CD8-positive, alpha-beta T cell (primary cell): ENCODE measurements at regions of chr11 and their contacts with region 1.

Region 1: GRCh38 chr11:45193695-45194094 is 47.3 kb downstream of the PRDM11 start:
- DNase-seq: no peak
- ATAC-seq: no peak
- H3K4me3 ChIP-seq: no peak overlapping the region
- H3K4me3 Mint-ChIP-seq: no peak overlapping the region
- H3K27ac ChIP-seq: no peak overlapping the region
- H3K27ac Mint-ChIP-seq: no peak overlapping the region
- H3K4me1 ChIP-seq: no peaks in the 10 kb centered on the region
- H3K4me1 Mint-ChIP-seq: no peaks in the 10 kb centered on the region
- H3K27me3 ChIP-seq: no peaks in the 10 kb centered on the region
- H3K27me3 Mint-ChIP-seq: no peaks in the 10 kb centered on the region
- CTCF ChIP-seq: no peak

Region 2: GRCh38 chr11:45267052-45267451 is 73.4 kb after region 1 on chr11:
- CTCF ChIA-PET with region 1: no interaction called
- POLR2A ChIA-PET with region 1: no interaction called
- intact Hi-C with region 1: no loop called
- DNase-seq: peak in 3 of 9 experiments; percentile 8 to 12 (median 12)
- ATAC-seq: no peak
- H3K4me3 ChIP-seq: no peak overlapping the region
- H3K4me3 Mint-ChIP-seq: no peak overlapping the region
- H3K27ac ChIP-seq: no peak overlapping the region
- H3K27ac Mint-ChIP-seq: no peak overlapping the region
- H3K4me1 ChIP-seq: no peaks in the 10 kb centered on the region
- H3K4me1 Mint-ChIP-seq: no peaks in the 10 kb centered on the region
- H3K27me3 ChIP-seq: peaks cover 0 to 6% of the 10 kb centered on the region in 2 experiments
- H3K27me3 Mint-ChIP-seq: peaks cover 45% of the 10 kb centered on the region
- CTCF ChIP-seq: no peak

Region 3: GRCh38 chr11:45301537-45302246 is 108.0 kb after region 1 on chr11:
- CTCF ChIA-PET with region 1: no interaction called
- POLR2A ChIA-PET with region 1: no interaction called
- intact Hi-C with region 1: loop called in 1 of 2 experiments (anchors 10 kb)
- DNase-seq: no peak
- ATAC-seq: no peak
- H3K4me3 ChIP-seq: no peak overlapping the region
- H3K4me3 Mint-ChIP-seq: no peak overlapping the region
- H3K27ac ChIP-seq: no peak overlapping the region
- H3K27ac Mint-ChIP-seq: no peak overlapping the region
- H3K4me1 ChIP-seq: no peaks in the 10 kb centered on the region
- H3K4me1 Mint-ChIP-seq: no peaks in the 10 kb centered on the region
- H3K27me3 ChIP-seq: no peaks in the 10 kb centered on the region
- H3K27me3 Mint-ChIP-seq: peaks cover 19% of the 10 kb centered on the region
- CTCF ChIP-seq: no peak